ENCODE measurements at regions of chr12 and their contacts with region 1.

Region 1: GRCh38 chr12:122951979-122952892 is 14.0 kb downstream of the ABCB9 start:
- DNase-seq: peak; percentile 77 to 85 (median 81)
- ATAC-seq: peak; percentile 90 to 95 (median 94)
- H3K4me3 ChIP-seq: no peak overlapping the region
- H3K27ac ChIP-seq: no peak overlapping the region
- H3K4me1 ChIP-seq: peaks cover 0 to 13% (median 7%) of the 10 kb centered on the region in 12 donors
- H3K27me3 ChIP-seq: no peaks in the 10 kb centered on the region
- CTCF ChIP-seq: peak; percentile 75 to 94 (median 88)
- POLR2A ChIP-seq: no peak

Region 2: DNA sequence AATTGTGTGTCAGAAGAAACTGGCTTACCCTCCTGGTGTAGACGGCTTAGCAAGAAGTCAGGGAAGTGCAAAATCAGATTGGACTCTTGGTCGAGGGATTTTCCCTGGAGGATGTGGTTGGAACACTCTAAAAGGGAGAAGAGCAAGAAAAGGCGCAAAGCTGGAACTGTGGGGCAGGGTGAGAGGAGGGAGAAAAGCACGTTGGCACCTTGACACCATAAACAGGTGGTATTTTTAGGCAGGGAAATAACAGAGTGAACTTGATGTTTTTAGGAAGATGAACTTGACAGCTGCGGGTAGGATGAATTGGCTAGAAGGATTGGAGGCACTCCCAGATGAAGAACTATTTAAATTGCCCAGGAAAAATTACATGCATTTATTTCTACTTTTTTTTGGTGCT is 316.8 kb before region 1 on chr12:
- intact Hi-C with region 1: loop called in 2 of 10 experiments (anchors 5 kb)
- DNase-seq: no peak
- ATAC-seq: no peak
- H3K4me3 ChIP-seq: no peak overlapping the region
- H3K27ac ChIP-seq: no peak overlapping the region
- H3K4me1 ChIP-seq: no peaks in the 10 kb centered on the region
- H3K27me3 ChIP-seq: no peaks in the 10 kb centered on the region
- CTCF ChIP-seq: no peak
- POLR2A ChIP-seq: no peak

Region 3: GRCh38 chr12:122793685-122794106 is 158.5 kb before region 1 on chr12:
- intact Hi-C with region 1: loop called (anchors 1 to 5 kb)
- DNase-seq: no peak
- ATAC-seq: peak in 2 of 4 donors; percentile 54 to 63
- H3K4me3 ChIP-seq: no peak overlapping the region
- H3K27ac ChIP-seq: no peak overlapping the region
- H3K4me1 ChIP-seq: peaks cover 0 to 3% (median 0%) of the 10 kb centered on the region in 12 donors
- H3K27me3 ChIP-seq: no peaks in the 10 kb centered on the region
- CTCF ChIP-seq: peak; percentile 65 to 83 (median 76)
- POLR2A ChIP-seq: no peak

Region 4: GRCh38 chr12:122799641-122800243 is 152.5 kb before region 1 on chr12:
- intact Hi-C with region 1: loop called in 7 of 10 experiments (anchors 2 to 5 kb)
- DNase-seq: no peak
- ATAC-seq: no peak
- H3K4me3 ChIP-seq: no peak overlapping the region
- H3K27ac ChIP-seq: no peak overlapping the region
- H3K4me1 ChIP-seq: no peaks in the 10 kb centered on the region
- H3K27me3 ChIP-seq: no peaks in the 10 kb centered on the region
- CTCF ChIP-seq: no peak
- POLR2A ChIP-seq: no peak

Region 5: GRCh38 chr12:122860346-122861090 is 91.7 kb before region 1 on chr12:
- intact Hi-C with region 1: loop called (anchors 1 to 2 kb)
- DNase-seq: peak; percentile 85 to 92 (median 87)
- ATAC-seq: peak; percentile 56 to 80 (median 72)
- H3K4me3 ChIP-seq: no peak overlapping the region
- H3K27ac ChIP-seq: peak overlapping the region in 9 of 12 donors; percentile 21 to 72 (median 49)
- H3K4me1 ChIP-seq: peaks cover 0 to 48% (median 25%) of the 10 kb centered on the region in 12 donors
- H3K27me3 ChIP-seq: no peaks in the 10 kb centered on the region
- CTCF ChIP-seq: peak; percentile 83 to 95 (median 88)
- POLR2A ChIP-seq: no peak

Measured in heart left ventricle (tissue), 16 donors.